Caco-2 (cell line): ENCODE measurements at regions of chr13 and their contacts with region 1.

Region 1: DNA sequence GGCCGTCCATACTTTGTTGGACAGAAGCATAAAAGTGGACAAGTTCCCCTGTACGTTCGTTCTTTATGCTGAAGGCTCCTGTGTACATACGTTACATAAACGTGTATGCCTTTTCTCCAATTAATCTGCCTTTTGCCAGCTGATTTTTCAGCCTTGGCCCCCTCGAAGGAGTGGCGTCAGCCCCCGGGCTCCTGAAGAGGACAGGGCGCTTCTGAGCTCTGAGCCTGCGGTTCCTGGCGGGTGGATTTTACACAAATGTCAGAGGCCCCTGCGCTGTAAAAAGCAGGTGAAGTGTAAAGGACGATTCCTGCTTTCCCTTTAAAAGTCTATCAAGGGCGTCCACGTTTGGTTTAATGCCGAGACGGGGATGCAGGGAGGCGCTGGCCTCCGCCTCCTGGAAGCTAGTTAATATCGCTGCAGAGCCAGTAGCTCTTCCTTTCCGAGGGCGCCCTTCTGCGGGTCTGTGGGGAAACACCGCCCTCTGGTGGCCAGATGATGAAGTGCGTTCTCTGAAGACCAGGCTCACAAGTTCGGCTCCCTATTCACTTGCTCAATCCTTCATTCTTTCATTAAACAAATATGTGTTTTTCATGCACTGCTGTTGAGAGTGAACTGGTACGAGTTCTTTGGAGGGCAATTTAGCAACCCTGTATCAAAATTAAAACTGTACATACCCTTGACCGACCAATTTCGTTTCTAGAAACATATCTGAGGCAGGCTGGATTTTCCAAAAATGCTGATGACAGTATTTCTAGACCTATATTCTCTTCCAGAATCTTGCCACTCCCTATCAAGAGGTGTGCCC is 62.0 kb downstream of the GPR12 start:
- DNase-seq: peak; percentile 78 to 88
- H3K4me3 ChIP-seq: no peak overlapping the region
- H3K4me3 Mint-ChIP-seq: no peak overlapping the region
- H3K27ac Mint-ChIP-seq: no peak overlapping the region
- H3K4me1 ChIP-seq: no peaks in the 10 kb centered on the region
- H3K4me1 Mint-ChIP-seq: no peaks in the 10 kb centered on the region
- H3K27me3 ChIP-seq: no peaks in the 10 kb centered on the region; the same call in 1 of the 2 replicates
- H3K27me3 Mint-ChIP-seq: peaks cover 25% of the 10 kb centered on the region
- CTCF ChIP-seq: peak; percentile 97

Region 2: GRCh38 chr13:26482451-26483197 is 216.0 kb before region 1 on chr13:
- CTCF ChIA-PET with region 1: no interaction called
- POLR2A ChIA-PET with region 1: no interaction called
- intact Hi-C with region 1: loop called (anchors 5 kb)
- DNase-seq: peak; percentile 63 to 71
- H3K4me3 ChIP-seq: no peak overlapping the region
- H3K4me3 Mint-ChIP-seq: no peak overlapping the region
- H3K27ac Mint-ChIP-seq: no peak overlapping the region
- H3K4me1 ChIP-seq: peaks cover 12% of the 10 kb centered on the region; the same call in 1 of the 2 replicates
- H3K4me1 Mint-ChIP-seq: peaks cover 8% of the 10 kb centered on the region
- H3K27me3 ChIP-seq: no peaks in the 10 kb centered on the region
- H3K27me3 Mint-ChIP-seq: no peaks in the 10 kb centered on the region
- CTCF ChIP-seq: peak; percentile 77 to 88

Region 3: GRCh38 chr13:26518451-26518959 is 180.1 kb before region 1 on chr13:
- CTCF ChIA-PET with region 1: no interaction called
- POLR2A ChIA-PET with region 1: no interaction called
- intact Hi-C with region 1: no loop called
- DNase-seq: no peak
- H3K4me3 ChIP-seq: no peak overlapping the region
- H3K4me3 Mint-ChIP-seq: no peak overlapping the region
- H3K27ac Mint-ChIP-seq: no peak overlapping the region
- H3K4me1 ChIP-seq: no peaks in the 10 kb centered on the region
- H3K4me1 Mint-ChIP-seq: no peaks in the 10 kb centered on the region
- H3K27me3 ChIP-seq: peaks cover 1% of the 10 kb centered on the region
- H3K27me3 Mint-ChIP-seq: peaks cover 8% of the 10 kb centered on the region
- CTCF ChIP-seq: no peak

Region 4: DNA sequence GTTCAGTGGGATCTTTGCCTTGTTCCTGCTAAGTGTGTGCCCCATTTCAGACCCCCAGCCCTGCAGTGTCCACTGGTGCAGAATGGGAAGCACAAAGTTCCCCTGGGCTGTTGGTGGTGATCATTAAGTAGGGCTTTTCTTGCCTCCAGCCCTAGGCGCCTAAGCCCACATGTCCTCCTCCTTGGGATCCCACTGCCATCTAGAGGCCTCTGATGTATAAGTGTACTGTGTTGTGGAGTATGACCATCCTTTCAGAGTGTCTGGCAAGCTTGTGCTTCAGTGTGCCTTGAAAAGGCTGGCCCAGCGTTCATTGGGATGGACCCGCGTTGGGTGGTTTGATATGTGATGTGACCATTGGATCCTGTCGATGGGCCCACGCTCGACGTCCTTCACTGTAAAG is 69.9 kb before region 1 on chr13:
- CTCF ChIA-PET with region 1: interaction called, 14 read pairs
- POLR2A ChIA-PET with region 1: no interaction called
- intact Hi-C with region 1: loop called (anchors 2 kb)
- DNase-seq: peak in 1 of 2 experiments; percentile 42
- H3K4me3 ChIP-seq: no peak overlapping the region
- H3K4me3 Mint-ChIP-seq: no peak overlapping the region
- H3K27ac Mint-ChIP-seq: no peak overlapping the region
- H3K4me1 ChIP-seq: no peaks in the 10 kb centered on the region
- H3K4me1 Mint-ChIP-seq: no peaks in the 10 kb centered on the region
- H3K27me3 ChIP-seq: no peaks in the 10 kb centered on the region
- H3K27me3 Mint-ChIP-seq: peaks cover 8% of the 10 kb centered on the region
- CTCF ChIP-seq: peak in 1 of 2 experiments; percentile 29

Region 5: GRCh38 chr13:26656919-26657318 is 41.7 kb before region 1 on chr13:
- CTCF ChIA-PET with region 1: interaction called, 46 read pairs
- POLR2A ChIA-PET with region 1: no interaction called
- intact Hi-C with region 1: loop called (anchors 1 kb)
- DNase-seq: peak in 1 of 2 experiments; percentile 46
- H3K4me3 ChIP-seq: no peak overlapping the region
- H3K4me3 Mint-ChIP-seq: no peak overlapping the region
- H3K27ac Mint-ChIP-seq: no peak overlapping the region
- H3K4me1 ChIP-seq: no peaks in the 10 kb centered on the region
- H3K4me1 Mint-ChIP-seq: no peaks in the 10 kb centered on the region
- H3K27me3 ChIP-seq: 0 out of 2 replicates have a peak, but pooled peaks cover 1% of the 10 kb centered on the region
- H3K27me3 Mint-ChIP-seq: peaks cover 11% of the 10 kb centered on the region
- CTCF ChIP-seq: peak; percentile 47 to 55

Region 6: GRCh38 chr13:26668357-26669146 is 30.0 kb before region 1 on chr13:
- CTCF ChIA-PET with region 1: interaction called, 10 read pairs
- POLR2A ChIA-PET with region 1: no interaction called
- intact Hi-C with region 1: no loop called
- DNase-seq: no peak
- H3K4me3 ChIP-seq: no peak overlapping the region
- H3K4me3 Mint-ChIP-seq: no peak overlapping the region
- H3K27ac Mint-ChIP-seq: no peak overlapping the region
- H3K4me1 ChIP-seq: no peaks in the 10 kb centered on the region
- H3K4me1 Mint-ChIP-seq: no peaks in the 10 kb centered on the region
- H3K27me3 ChIP-seq: no peaks in the 10 kb centered on the region; the same call in none of the 2 replicates
- H3K27me3 Mint-ChIP-seq: peaks cover 19% of the 10 kb centered on the region
- CTCF ChIP-seq: no peak

Region 7: DNA sequence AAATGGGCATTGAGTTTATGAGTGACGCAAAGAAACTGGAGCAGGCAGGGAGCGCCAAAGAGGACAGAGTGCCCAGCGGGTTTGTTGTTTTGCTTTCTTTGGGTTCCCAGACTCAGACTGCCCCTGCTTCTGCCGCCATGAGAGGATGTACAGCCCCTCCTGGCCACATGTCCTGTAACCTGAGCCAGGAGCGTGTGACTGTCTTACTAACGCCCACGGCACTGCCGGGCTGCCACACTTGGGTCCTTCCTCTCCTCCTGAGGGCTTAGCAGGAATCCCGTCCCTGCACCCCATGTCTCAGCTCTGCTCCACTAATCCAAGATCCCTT is 18.5 kb before region 1 on chr13:
- CTCF ChIA-PET with region 1: interaction called, 12 read pairs
- POLR2A ChIA-PET with region 1: no interaction called
- intact Hi-C with region 1: no loop called
- DNase-seq: no peak
- H3K4me3 ChIP-seq: no peak overlapping the region
- H3K4me3 Mint-ChIP-seq: no peak overlapping the region
- H3K27ac Mint-ChIP-seq: no peak overlapping the region
- H3K4me1 ChIP-seq: no peaks in the 10 kb centered on the region
- H3K4me1 Mint-ChIP-seq: no peaks in the 10 kb centered on the region
- H3K27me3 ChIP-seq: no peaks in the 10 kb centered on the region; the same call in none of the 2 replicates
- H3K27me3 Mint-ChIP-seq: peaks cover 27% of the 10 kb centered on the region
- CTCF ChIP-seq: no peak